Calu3 (cell line): ENCODE measurements at regions of chr2 and their contacts with region 1.

Region 1: GRCh38 chr2:181780047-181780651 is 99.8 kb upstream of the NEUROD1 start:
- DNase-seq: peak; percentile 31
- H3K4me3 Mint-ChIP-seq: no peak overlapping the region
- H3K27ac Mint-ChIP-seq: peak overlapping the region; percentile 90
- H3K4me1 Mint-ChIP-seq: peaks cover 65% of the 10 kb centered on the region
- H3K27me3 Mint-ChIP-seq: no peaks in the 10 kb centered on the region
- CTCF ChIP-seq: no peak

Region 2: DNA sequence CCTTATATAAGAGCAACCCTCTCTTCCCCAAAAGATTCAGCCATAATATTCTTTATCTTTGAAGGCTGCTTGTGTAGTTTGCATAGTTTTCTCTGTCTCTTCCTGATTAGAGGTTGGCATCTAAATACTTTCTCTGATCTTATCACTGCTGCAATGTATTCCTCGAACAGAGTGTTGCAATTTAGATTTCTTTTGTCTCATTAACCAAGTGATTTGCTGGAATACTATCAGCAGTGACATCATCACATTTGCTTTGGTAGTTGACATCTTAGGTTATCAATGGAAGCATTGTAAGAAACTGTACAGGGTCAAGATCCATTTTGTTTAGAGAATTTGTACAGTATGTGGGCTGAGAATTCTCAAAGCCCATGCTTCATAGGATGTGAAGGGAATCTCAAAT is 27.8 kb before region 1 on chr2:
- CTCF ChIA-PET with region 1: no interaction called
- intact Hi-C with region 1: loop called (anchors 1 kb)
- DNase-seq: no peak
- H3K4me3 Mint-ChIP-seq: no peak overlapping the region
- H3K27ac Mint-ChIP-seq: no peak overlapping the region
- H3K4me1 Mint-ChIP-seq: peaks cover 37% of the 10 kb centered on the region
- H3K27me3 Mint-ChIP-seq: no peaks in the 10 kb centered on the region
- CTCF ChIP-seq: no peak